Sigmoid colon (tissue), 7 donors: ENCODE measurements at regions of chr1 and their contacts with region 1.

Region 1: GRCh38 chr1:8303141-8303540 is 14.8 kb upstream of the SLC45A1 start:
- DNase-seq: no peak
- H3K4me3 ChIP-seq: no peak overlapping the region
- H3K27ac ChIP-seq: no peak overlapping the region
- H3K4me1 ChIP-seq: peaks cover 0 to 7% (median 0%) of the 10 kb centered on the region in 4 donors
- H3K27me3 ChIP-seq: no peaks in the 10 kb centered on the region
- CTCF ChIP-seq: no peak
- EP300 ChIP-seq: no peak
- POLR2A ChIP-seq: no peak

Region 2: GRCh38 chr1:8077120-8077573 is 226.0 kb before region 1 on chr1:
- intact Hi-C with region 1: no loop called
- DNase-seq: peak; percentile 82
- H3K4me3 ChIP-seq: no peak overlapping the region
- H3K27ac ChIP-seq: peak overlapping the region; percentile 52 to 90 (median 78)
- H3K4me1 ChIP-seq: peaks cover 0 to 45% (median 29%) of the 10 kb centered on the region in 4 donors
- H3K27me3 ChIP-seq: no peaks in the 10 kb centered on the region
- CTCF ChIP-seq: no peak
- EP300 ChIP-seq: no peak
- POLR2A ChIP-seq: no peak

Region 3: DNA sequence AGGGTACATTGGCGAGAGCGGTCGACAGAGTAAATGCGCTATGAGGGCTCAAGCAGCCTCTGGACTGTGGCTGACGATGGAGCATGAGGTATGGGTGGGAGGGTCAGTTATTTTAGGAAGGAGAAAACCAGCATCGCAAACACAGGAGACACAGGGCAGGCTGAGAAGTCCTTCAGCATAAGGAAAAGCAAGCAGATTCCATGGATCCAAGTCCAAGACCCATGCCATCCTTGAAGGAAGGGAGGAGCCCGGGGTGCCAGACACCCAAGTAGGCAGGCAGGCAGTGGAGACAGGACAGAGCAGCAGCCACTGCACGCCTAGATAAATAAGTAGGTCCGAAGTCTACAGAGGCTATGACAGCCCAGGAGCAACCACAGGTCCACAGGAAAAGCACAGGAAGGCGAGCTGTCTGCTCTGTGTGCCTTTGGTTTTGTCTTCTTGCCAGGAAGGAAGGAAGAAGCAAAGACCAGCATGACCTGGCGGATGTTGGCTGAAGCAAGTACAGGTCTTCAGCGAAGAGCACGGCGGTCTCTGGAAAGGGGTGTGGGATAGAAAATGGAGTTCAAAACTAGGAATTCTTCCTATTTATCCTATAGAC is 61.6 kb before region 1 on chr1:
- intact Hi-C with region 1: no loop called
- DNase-seq: no peak
- H3K4me3 ChIP-seq: no peak overlapping the region
- H3K27ac ChIP-seq: no peak overlapping the region
- H3K4me1 ChIP-seq: peaks cover 0 to 21% (median 10%) of the 10 kb centered on the region in 4 donors
- H3K27me3 ChIP-seq: no peaks in the 10 kb centered on the region
- CTCF ChIP-seq: no peak
- EP300 ChIP-seq: no peak
- POLR2A ChIP-seq: no peak

Region 4: DNA sequence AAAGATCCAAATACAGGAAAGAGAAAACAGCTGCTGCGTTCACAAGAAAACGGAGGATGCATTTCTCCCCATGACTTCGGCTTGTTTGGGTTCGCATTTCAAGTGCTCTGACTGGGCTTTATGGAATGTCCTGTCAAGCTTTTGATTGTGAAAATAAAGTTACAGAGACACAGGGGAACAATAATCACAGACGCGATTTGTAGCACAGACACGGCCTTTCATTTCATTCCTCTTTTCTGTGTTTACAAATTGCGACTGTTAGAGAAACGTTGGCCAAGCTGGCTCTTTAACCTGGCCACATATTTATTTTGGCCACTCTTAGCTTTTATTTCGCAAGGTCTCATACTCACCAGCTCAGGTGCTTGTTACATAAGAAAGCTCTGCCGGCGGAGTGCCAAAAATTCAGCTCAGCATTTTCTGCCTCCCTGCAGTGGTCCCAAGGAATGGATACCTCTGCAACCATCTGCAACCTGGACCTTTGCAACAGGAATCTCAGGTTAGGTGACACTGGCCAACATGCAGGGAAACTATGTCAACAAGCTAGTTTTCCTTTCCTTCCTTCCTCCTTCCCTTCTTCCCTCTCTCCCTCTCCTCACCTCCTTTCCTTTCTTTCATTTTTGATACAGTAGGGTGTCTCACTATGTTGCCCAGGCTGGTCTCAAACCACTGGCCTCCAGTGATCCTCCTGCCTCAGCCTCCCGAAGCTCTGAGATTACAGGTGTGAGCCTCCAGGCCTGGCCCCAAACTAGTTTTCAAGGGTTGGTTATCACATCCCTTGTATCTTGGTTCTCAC is 43.4 kb before region 1 on chr1:
- intact Hi-C with region 1: loop called (anchors 5 kb)
- DNase-seq: peak; percentile 86
- H3K4me3 ChIP-seq: no peak overlapping the region
- H3K27ac ChIP-seq: peak overlapping the region; percentile 15 to 77 (median 46)
- H3K4me1 ChIP-seq: peaks cover 0 to 16% (median 6%) of the 10 kb centered on the region in 4 donors
- H3K27me3 ChIP-seq: no peaks in the 10 kb centered on the region
- CTCF ChIP-seq: no peak
- EP300 ChIP-seq: no peak
- POLR2A ChIP-seq: no peak

Region 5: DNA sequence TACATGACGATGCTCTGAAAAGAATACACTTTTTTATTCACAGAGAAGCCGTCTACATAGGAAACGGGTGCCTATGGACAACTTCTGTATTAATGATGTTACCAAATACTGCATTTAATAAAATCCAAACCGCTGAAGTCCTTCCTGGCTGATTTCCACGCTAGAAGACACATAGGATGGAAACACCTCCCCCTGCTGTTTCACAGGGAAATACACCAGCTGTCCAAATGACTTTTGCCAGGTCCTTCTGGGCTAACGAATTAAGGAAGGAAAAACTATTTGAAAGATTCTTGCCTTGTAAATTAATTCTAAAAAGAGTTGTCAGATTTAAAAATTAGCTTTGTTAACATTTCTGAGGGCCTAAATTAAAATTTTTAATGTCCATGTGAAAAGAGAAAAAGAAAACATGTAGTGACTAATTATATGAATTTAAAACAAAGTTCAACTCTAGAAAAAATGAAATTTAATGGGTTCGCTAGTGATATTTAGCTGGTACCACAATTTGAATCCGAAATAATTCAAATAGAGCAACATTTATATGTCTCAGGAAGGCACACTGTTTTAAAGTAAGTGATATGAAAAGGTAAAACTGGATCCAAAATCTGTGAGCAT is 368.3 kb after region 1 on chr1:
- intact Hi-C with region 1: no loop called
- DNase-seq: peak; percentile 81
- H3K4me3 ChIP-seq: no peak overlapping the region
- H3K27ac ChIP-seq: peak overlapping the region in 2 of 4 donors; percentile 46 to 51
- H3K4me1 ChIP-seq: peaks cover 0 to 65% (median 51%) of the 10 kb centered on the region in 4 donors
- H3K27me3 ChIP-seq: no peaks in the 10 kb centered on the region
- CTCF ChIP-seq: peak; percentile 44 to 87 (median 76)
- EP300 ChIP-seq: no peak
- POLR2A ChIP-seq: no peak